ENCODE measurements at regions of chr7 and their contacts with region 1.

Region 1: GRCh38 chr7:74684921-74685320 is 27.4 kb downstream of the GTF2I start:
- DNase-seq: no peak
- H3K4me3 Mint-ChIP-seq: no peak overlapping the region
- H3K27ac Mint-ChIP-seq: no peak overlapping the region
- H3K4me1 Mint-ChIP-seq: peaks cover 21% of the 10 kb centered on the region
- H3K27me3 Mint-ChIP-seq: no peaks in the 10 kb centered on the region

Region 2: DNA sequence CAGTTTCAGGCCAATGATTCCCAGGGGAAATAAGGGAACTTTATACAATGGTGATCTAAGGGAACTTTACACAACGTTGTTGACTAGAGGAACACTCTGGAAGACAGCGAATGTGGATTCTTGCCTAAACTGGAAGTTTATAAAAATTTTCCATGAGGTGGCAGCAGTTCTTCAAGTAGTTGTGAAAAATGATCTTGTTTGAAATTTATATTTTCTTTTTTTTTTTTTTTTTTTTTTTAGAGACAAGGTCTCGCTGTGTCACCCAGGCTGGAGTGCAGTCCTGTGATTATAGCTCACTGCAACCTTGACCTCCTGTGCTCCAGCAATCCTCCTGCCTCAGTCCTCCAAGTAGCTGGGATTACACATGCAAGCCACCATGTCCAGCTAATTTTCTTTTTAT is 59.5 kb before region 1 on chr7:
- intact Hi-C with region 1: loop called (anchors 10 kb)
- DNase-seq: no peak
- H3K4me3 Mint-ChIP-seq: no peak overlapping the region
- H3K27ac Mint-ChIP-seq: no peak overlapping the region
- H3K4me1 Mint-ChIP-seq: no peaks in the 10 kb centered on the region
- H3K27me3 Mint-ChIP-seq: peaks cover 5% of the 10 kb centered on the region

Region 3: DNA sequence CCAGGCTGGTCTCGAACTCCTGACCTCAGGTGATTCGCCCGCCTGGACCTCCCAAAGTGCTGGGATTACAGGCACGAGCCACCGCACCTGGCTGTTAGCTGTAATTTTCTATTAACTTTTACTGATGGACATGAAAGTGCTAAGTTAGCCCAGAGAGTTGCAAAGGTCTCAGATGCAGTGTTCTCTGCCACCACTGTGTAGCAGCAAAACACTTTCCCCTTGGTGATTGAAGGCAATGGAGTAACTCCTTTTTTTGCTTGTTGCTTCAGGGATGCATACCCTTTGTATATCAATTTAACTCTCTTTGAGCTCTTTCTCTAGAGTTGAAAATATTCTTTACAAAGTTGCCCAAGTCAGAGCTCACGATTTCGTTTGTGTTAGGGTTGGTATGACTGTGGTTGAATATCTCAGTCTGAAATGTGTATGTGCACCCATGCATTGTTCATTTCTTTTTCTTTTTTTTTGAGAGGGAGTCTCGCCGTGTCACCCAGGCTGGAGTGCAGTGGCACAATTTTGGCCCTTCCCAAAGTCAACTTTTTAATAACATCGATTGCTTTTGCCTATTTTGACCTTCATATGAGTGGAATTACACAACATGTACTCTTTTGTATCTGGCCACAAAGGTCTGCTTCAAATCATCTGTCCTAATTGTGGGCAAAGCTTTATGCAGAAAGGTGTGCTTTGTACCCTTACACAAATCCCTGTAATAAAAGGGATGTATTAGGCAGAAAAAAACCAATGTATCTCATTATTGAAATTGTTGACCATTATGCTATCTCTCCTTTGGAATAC is 25.2 kb after region 1 on chr7:
- intact Hi-C with region 1: no loop called
- DNase-seq: no peak
- H3K4me3 Mint-ChIP-seq: no peak overlapping the region
- H3K27ac Mint-ChIP-seq: no peak overlapping the region
- H3K4me1 Mint-ChIP-seq: peaks cover 4% of the 10 kb centered on the region
- H3K27me3 Mint-ChIP-seq: no peaks in the 10 kb centered on the region

Measured in activated T-helper 1 cell treated with anti-CD3 and anti-CD28 coated beads, Interleukin-12 subunit alpha, Interleukin-12 subunit beta, Interleukin-2, Interleukin-4 antibody, amounts not matched to agents 30 ng/mL and 10 ng/mL and 1 ng/mL, durations not matched to agents 14 hours and 24 hours and 36 hours (primary cell).